Caco-2 (cell line): ENCODE measurements at regions of chr17 and their contacts with region 1.

Region 1: GRCh38 chr17:29589524-29590410 is at the start of gene GIT1:
- DNase-seq: peak; percentile 81 to 92
- H3K4me3 ChIP-seq: peak within 1 kb of the TSS; percentile 88
- H3K4me3 Mint-ChIP-seq: peak within 1 kb of the TSS; percentile 86
- H3K27ac Mint-ChIP-seq: peak within 1 kb of the TSS; percentile 72
- H3K4me1 ChIP-seq: peaks cover 35% of the 10 kb centered on the region
- H3K4me1 Mint-ChIP-seq: no peaks in the 10 kb centered on the region
- H3K27me3 ChIP-seq: no peaks in the 10 kb centered on the region
- H3K27me3 Mint-ChIP-seq: no peaks in the 10 kb centered on the region
- CTCF ChIP-seq: no peak
- total RNA-seq, gene GIT1: 46.5 and 47.0 TPM in 2 replicates

Region 2: GRCh38 chr17:29293890-29294579 is 295.7 kb before region 1 on chr17 and contains the start of gene NUFIP2:
- CTCF ChIA-PET with region 1: interaction called, 3 read pairs
- POLR2A ChIA-PET with region 1: no interaction called
- intact Hi-C with region 1: loop called (anchors 5 kb)
- DNase-seq: peak; percentile 99
- H3K4me3 ChIP-seq: peak within 1 kb of the TSS; percentile 100
- H3K4me3 Mint-ChIP-seq: peak within 1 kb of the TSS; percentile 94
- H3K27ac Mint-ChIP-seq: peak within 1 kb of the TSS; percentile 96
- H3K4me1 ChIP-seq: peaks cover 11% of the 10 kb centered on the region
- H3K4me1 Mint-ChIP-seq: peaks cover 13% of the 10 kb centered on the region
- H3K27me3 ChIP-seq: no peaks in the 10 kb centered on the region
- H3K27me3 Mint-ChIP-seq: no peaks in the 10 kb centered on the region
- CTCF ChIP-seq: no peak
- total RNA-seq, gene NUFIP2: 105 and 114 TPM in 2 replicates

Region 3: GRCh38 chr17:29533976-29534375 is 55.8 kb before region 1 on chr17:
- CTCF ChIA-PET with region 1: interaction called, 4 read pairs
- POLR2A ChIA-PET with region 1: no interaction called
- intact Hi-C with region 1: loop called (anchors 10 kb)
- DNase-seq: no peak
- H3K4me3 ChIP-seq: no peak overlapping the region
- H3K4me3 Mint-ChIP-seq: no peak overlapping the region
- H3K27ac Mint-ChIP-seq: no peak overlapping the region
- H3K4me1 ChIP-seq: no peaks in the 10 kb centered on the region
- H3K4me1 Mint-ChIP-seq: no peaks in the 10 kb centered on the region
- H3K27me3 ChIP-seq: no peaks in the 10 kb centered on the region
- H3K27me3 Mint-ChIP-seq: no peaks in the 10 kb centered on the region
- CTCF ChIP-seq: no peak

Region 4: DNA sequence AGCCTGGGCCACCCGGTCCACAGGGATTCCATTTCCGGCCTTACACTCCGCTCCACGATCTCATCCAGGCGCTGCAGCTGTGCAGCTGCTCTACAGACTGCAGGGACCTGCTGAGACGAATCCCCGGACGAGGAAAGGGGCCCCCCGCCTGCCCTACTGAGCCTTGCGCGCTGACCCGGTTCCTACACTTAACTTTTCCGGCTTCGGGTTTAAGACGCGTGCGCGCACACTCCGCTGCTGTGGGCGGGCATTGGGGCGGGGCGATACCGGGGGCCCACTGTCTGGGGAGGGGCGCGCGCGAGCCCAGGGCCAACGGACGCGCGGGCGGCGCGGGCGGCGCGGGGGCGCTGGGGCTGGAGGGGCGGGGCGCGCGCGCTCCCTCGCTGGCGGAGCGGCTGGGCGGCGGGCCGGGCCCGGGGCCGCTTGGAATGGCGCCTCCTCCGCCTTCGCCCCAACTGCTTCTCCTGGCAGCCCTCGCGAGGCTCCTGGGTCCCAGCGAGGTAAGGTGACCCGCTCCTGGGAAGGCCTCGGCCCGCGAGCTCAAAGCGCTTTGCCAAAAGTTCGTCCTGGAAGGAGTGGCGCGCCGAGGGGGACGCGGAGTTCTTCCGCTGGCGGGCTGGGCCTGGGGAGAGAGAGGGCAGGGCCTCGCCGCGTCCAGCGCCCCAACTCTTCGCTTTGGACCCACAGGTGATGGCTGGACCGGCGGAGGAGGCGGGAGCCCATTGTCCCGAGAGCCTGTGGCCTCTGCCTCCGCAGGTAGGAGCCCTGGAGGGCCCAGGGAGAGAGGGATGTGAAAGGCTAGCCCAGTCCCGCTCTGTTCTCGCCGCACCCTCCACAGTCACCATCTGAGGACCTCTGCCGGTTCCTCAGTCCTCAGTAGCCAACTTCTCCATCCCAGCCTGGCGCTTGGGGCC is 21.2 kb before region 1 on chr17 and contains the start of gene TP53I13:
- CTCF ChIA-PET with region 1: interaction called, 28 read pairs
- POLR2A ChIA-PET with region 1: interaction called, 4 read pairs
- intact Hi-C with region 1: loop called (anchors 1 kb)
- DNase-seq: peak; percentile 92 to 93
- H3K4me3 ChIP-seq: peak within 1 kb of the TSS; percentile 87
- H3K4me3 Mint-ChIP-seq: peak within 1 kb of the TSS; percentile 97
- H3K27ac Mint-ChIP-seq: peak within 1 kb of the TSS; percentile 85
- H3K4me1 ChIP-seq: peaks cover 10% of the 10 kb centered on the region; the same call in 1 of the 2 replicates
- H3K4me1 Mint-ChIP-seq: peaks cover 6% of the 10 kb centered on the region
- H3K27me3 ChIP-seq: no peaks in the 10 kb centered on the region
- H3K27me3 Mint-ChIP-seq: no peaks in the 10 kb centered on the region
- CTCF ChIP-seq: no peak
- total RNA-seq, gene TP53I13: 43.9 and 49.2 TPM in 2 replicates

Region 5: GRCh38 chr17:29574732-29575504 is 14.8 kb before region 1 on chr17:
- CTCF ChIA-PET with region 1: interaction called, 15 read pairs
- POLR2A ChIA-PET with region 1: interaction called, 3 read pairs
- intact Hi-C with region 1: loop called (anchors 1 kb)
- DNase-seq: peak in 1 of 2 experiments; percentile 53
- H3K4me3 ChIP-seq: no peak overlapping the region
- H3K4me3 Mint-ChIP-seq: no peak overlapping the region
- H3K27ac Mint-ChIP-seq: no peak overlapping the region
- H3K4me1 ChIP-seq: peaks cover 10% of the 10 kb centered on the region
- H3K4me1 Mint-ChIP-seq: peaks cover 6% of the 10 kb centered on the region
- H3K27me3 ChIP-seq: no peaks in the 10 kb centered on the region
- H3K27me3 Mint-ChIP-seq: no peaks in the 10 kb centered on the region
- CTCF ChIP-seq: no peak

Region 6: DNA sequence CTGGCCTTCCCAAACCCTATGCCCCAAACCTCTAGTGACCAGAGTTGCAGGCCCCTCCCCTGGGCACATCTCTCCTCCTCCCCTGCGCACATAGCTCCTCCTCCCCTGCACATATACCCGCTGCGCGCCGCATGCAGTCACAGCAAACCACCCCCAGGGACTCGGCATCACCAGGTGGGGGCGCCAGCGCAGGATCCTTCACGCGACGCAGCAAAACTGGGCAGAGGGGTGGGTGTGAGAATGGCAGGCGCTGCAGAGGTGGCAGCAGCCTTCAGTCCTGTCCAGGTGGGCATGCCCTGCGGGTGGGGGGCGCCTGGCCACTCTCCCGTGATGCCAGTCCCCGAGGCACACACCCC is 27.3 kb after region 1 on chr17:
- CTCF ChIA-PET with region 1: interaction called, 69 read pairs
- POLR2A ChIA-PET with region 1: interaction called, 6 read pairs
- intact Hi-C with region 1: loop called (anchors 2 kb)
- DNase-seq: peak; percentile 85 to 87
- H3K4me3 ChIP-seq: peak overlapping the region; percentile 42
- H3K4me3 Mint-ChIP-seq: peak overlapping the region; percentile 87
- H3K27ac Mint-ChIP-seq: peak overlapping the region; percentile 19
- H3K4me1 ChIP-seq: peaks cover 23% of the 10 kb centered on the region
- H3K4me1 Mint-ChIP-seq: peaks cover 9% of the 10 kb centered on the region
- H3K27me3 ChIP-seq: peaks cover 8% of the 10 kb centered on the region
- H3K27me3 Mint-ChIP-seq: peaks cover 5% of the 10 kb centered on the region
- CTCF ChIP-seq: peak; percentile 67 to 74

Region 7: DNA sequence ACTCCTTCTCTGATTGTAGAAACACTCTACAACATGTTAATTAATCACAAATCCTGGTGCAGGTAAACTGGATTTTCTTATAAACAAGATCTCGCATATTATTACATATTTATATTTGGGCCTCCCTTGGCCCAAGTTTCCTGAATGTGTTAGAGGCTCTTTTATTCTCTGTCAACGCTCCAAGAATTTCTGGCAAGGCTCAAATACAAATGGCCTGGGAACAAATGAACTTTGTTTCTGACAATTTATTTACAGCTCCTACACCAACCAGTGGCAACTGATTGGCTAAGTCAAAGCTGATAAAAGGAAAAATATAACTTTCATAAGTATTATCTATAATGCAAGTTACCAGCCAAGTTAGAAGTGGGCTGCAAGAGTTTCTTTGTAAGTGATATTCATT is 97.8 kb after region 1 on chr17:
- CTCF ChIA-PET with region 1: no interaction called
- POLR2A ChIA-PET with region 1: no interaction called
- intact Hi-C with region 1: no loop called
- DNase-seq: no peak
- H3K4me3 ChIP-seq: no peak overlapping the region
- H3K4me3 Mint-ChIP-seq: no peak overlapping the region
- H3K27ac Mint-ChIP-seq: no peak overlapping the region
- H3K4me1 ChIP-seq: no peaks in the 10 kb centered on the region
- H3K4me1 Mint-ChIP-seq: peaks cover 2% of the 10 kb centered on the region
- H3K27me3 ChIP-seq: no peaks in the 10 kb centered on the region
- H3K27me3 Mint-ChIP-seq: no peaks in the 10 kb centered on the region
- CTCF ChIP-seq: no peak